ENCODE measurements at regions of chr6 and their contacts with region 1.

Region 1: GRCh38 chr6:40328405-40328987 is 258.7 kb downstream of the LRFN2 start:
- DNase-seq: peak; percentile 84
- ATAC-seq: peak; percentile 80
- H3K4me3 Mint-ChIP-seq: peak overlapping the region; percentile 34
- H3K27ac Mint-ChIP-seq: peak overlapping the region; percentile 42
- H3K4me1 Mint-ChIP-seq: peaks cover 70% of the 10 kb centered on the region
- H3K27me3 Mint-ChIP-seq: peaks cover 20% of the 10 kb centered on the region
- CTCF ChIP-seq: peak; percentile 79

Region 2: DNA sequence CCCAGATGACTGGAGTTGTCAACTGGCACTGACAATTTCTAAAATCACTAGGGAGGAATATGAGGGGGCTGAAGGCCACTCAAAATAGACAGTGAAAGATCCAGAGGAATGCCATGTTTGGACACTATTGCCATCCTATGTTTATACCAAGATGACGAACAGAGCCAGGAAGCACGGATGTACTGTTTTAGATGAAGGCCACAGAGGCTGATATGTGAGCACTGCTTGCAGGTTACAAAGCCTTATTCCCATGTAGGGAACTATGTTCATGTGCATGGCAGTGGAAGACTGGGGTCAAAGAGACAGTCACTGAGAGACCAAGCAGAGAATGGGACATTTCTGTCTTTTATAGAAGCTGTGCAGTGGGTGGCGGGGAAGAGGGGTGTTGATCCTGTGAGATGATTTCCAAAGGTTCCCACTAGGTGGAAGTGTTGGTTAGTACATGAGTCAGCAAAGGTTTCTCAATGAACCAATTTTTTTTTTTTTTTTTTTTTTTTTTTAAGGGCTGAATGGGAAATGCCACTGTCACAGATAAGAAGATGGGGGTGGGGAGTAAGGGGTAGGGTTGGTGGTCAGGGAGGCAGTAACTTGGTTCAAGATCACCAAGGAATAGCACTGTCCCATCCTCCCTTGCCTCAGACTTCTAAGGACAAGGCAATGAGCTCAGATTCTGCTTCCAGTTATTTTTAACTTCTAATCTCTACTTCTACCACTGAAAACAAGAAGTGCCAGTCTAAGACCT is 347.5 kb before region 1 on chr6:
- CTCF ChIA-PET with region 1: interaction called, 17 read pairs
- POLR2A ChIA-PET with region 1: no interaction called
- DNase-seq: peak; percentile 24
- ATAC-seq: peak; percentile 82
- H3K4me3 Mint-ChIP-seq: no peak overlapping the region
- H3K27ac Mint-ChIP-seq: no peak overlapping the region
- H3K4me1 Mint-ChIP-seq: peaks cover 7% of the 10 kb centered on the region
- H3K27me3 Mint-ChIP-seq: no peaks in the 10 kb centered on the region
- CTCF ChIP-seq: peak; percentile 39

Region 3: DNA sequence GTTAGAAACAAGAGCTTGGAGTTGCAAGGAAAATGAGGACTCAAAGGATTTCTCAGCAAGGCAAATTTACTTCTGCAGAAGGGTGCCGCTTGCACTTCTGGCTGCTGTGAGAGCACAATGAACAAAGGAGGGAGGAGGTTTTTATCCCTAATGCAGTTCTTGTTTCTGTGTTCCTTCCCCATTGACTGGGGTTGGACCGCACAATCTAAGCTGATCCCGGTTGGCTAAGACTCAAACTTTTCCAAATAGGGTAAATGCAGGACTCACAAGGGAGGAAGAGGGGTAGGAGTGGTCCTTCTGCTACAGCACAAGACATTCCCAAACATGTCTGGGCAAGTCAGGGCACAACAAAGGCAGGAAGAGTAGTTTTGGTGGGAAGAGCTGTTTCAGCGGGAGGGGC is 144.6 kb before region 1 on chr6:
- CTCF ChIA-PET with region 1: no interaction called
- POLR2A ChIA-PET with region 1: no interaction called
- DNase-seq: no peak
- ATAC-seq: peak; percentile 77
- H3K4me3 Mint-ChIP-seq: no peak overlapping the region
- H3K27ac Mint-ChIP-seq: peak overlapping the region; percentile 50
- H3K4me1 Mint-ChIP-seq: peaks cover 38% of the 10 kb centered on the region
- H3K27me3 Mint-ChIP-seq: no peaks in the 10 kb centered on the region; the same call in 1 of the 2 replicates
- CTCF ChIP-seq: no peak

Region 4: DNA sequence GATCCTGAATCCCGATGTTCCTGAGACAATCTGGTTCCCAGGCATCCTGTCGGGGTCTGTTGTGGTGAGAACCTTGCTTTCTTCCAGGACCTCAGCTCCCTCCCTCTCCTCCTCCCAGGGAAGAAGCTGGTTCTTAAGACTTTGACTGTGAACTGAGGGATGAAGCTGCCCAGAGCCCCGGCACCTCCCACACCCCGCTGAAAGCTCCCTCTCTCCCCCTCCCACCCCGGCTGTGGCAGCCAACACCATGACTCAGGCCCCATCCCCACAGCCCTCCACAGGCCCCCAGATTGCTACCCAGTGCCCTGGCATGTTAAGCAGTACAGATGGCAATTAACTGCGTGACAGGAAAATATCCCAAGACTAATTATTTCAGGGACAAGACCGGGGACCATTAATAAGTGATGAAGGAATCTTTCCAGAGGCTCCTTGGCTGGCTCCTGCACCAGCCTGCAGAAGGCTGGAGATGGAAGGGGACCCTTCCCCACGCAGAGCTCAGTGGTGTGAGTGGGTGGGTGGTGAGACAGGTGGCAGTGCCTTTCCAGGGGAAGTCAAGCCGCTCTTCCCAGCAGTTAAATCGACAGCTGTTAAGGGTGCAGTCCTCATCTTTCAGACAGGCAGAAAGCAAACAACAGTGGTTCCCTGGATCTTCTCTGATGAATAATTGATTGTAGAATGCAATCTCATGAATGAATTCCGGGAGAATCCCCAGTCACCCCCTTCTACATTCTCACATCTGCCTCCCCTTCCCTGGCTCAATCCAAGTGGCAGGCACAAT is 20.8 kb after region 1 on chr6:
- CTCF ChIA-PET with region 1: interaction called, 40 read pairs
- POLR2A ChIA-PET with region 1: interaction called, 5 read pairs
- DNase-seq: no peak
- ATAC-seq: peak; percentile 10; the same call in 1 of the 2 replicates
- H3K4me3 Mint-ChIP-seq: no peak overlapping the region
- H3K27ac Mint-ChIP-seq: no peak overlapping the region
- H3K4me1 Mint-ChIP-seq: peaks cover 18% of the 10 kb centered on the region
- H3K27me3 Mint-ChIP-seq: no peaks in the 10 kb centered on the region
- CTCF ChIP-seq: no peak

Region 5: GRCh38 chr6:40479706-40480105 is 151.2 kb after region 1 on chr6:
- CTCF ChIA-PET with region 1: interaction called, 10 read pairs
- POLR2A ChIA-PET with region 1: no interaction called
- DNase-seq: no peak
- ATAC-seq: no peak
- H3K4me3 Mint-ChIP-seq: no peak overlapping the region
- H3K27ac Mint-ChIP-seq: no peak overlapping the region
- H3K4me1 Mint-ChIP-seq: peaks cover 15% of the 10 kb centered on the region
- H3K27me3 Mint-ChIP-seq: no peaks in the 10 kb centered on the region
- CTCF ChIP-seq: no peak

Region 6: DNA sequence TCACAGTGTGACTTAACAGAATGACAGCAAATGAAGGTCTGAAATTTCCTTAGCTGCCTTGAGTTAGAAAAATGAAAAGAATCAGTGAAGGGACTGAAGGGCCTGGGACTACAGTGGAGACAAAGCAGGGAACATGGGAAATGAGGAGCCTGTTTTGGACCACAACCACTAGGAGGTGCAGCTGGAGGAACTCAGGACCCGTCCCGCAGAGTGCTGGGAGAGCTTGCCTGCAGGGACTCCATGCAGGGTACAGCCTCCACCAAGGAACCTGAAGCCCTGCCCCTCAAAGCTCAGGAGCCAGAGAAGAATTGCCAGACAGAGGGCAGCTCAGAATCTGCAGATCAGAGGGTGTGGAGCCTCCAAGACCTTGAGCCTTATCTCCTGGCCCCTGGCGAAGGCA is 207.9 kb after region 1 on chr6:
- CTCF ChIA-PET with region 1: interaction called, 17 read pairs
- POLR2A ChIA-PET with region 1: no interaction called
- DNase-seq: peak; percentile 54
- ATAC-seq: peak; percentile 93
- H3K4me3 Mint-ChIP-seq: no peak overlapping the region
- H3K27ac Mint-ChIP-seq: no peak overlapping the region
- H3K4me1 Mint-ChIP-seq: peaks cover 22% of the 10 kb centered on the region
- H3K27me3 Mint-ChIP-seq: no peaks in the 10 kb centered on the region; the same call in 1 of the 2 replicates
- CTCF ChIP-seq: no peak

Region 7: DNA sequence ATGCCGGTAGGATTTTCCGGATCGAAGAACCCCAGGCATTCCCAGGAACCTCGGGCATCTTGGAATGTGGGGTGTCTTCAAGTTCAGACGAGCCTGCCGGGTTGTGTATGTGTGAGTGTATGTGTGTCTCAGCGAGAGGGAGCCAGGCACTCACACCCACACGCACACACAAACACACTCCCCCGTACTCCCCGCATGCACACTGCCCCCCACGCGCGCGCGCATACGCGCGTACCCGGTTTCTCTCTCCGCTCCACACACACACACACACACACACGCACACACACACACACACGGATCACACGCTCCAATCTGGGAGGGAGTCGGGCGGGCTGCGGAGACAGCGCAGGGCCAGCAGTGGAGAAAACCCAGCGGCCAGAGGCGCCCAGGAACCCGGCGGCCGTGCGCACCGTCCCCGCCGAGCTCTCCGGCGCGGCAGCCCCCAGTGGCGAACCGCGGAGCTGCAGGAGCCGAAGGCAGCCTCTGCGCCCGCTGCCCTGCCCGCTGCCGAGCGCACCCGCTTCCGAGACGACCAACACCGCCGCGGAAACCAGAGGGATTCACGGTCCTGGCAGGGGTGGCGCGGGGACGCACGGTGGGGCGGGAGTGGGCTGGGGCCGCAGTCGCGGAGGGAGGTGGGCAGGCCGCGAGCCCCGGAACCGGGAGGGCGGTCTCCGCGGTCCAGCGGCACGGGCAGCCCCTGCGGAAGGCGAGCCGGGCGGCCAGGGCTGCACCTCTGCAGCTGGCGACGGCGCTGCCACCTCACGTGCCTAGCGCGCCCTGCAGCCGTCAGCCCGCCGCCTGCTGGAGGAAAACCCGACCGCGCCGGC is 259.0 kb after region 1 on chr6 and contains the start of gene LRFN2:
- CTCF ChIA-PET with region 1: interaction called, 130 read pairs
- POLR2A ChIA-PET with region 1: no interaction called
- DNase-seq: peak; percentile 86
- ATAC-seq: peak; percentile 81
- H3K4me3 Mint-ChIP-seq: peak within 1 kb of the TSS; percentile 80
- H3K27ac Mint-ChIP-seq: no peak within 1 kb of the TSS
- H3K4me1 Mint-ChIP-seq: peaks cover 40% of the 10 kb centered on the region
- H3K27me3 Mint-ChIP-seq: peaks cover 49% of the 10 kb centered on the region
- CTCF ChIP-seq: peak; percentile 59
- total RNA-seq, gene LRFN2: 1.3 to 1.6 TPM (median 1.4 TPM) in 3 replicates

Region 8: DNA sequence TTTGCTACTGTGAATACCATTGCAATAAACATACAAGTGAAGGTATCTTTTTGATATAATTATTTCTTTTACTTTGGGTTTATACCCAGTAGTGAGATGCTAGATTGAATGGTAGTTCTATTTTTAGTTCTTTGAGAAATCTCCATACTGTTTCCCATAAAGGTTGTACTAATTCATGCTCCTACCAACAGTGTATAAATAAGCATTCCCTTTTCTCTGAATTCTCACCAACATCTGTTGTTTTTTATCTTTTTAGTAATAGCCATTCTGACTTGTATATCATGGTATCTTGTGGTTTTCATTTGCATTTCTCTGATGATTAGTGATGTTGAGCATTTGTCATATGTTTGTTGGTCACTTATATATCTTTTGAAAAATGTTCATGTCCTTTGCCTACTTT is 442.3 kb after region 1 on chr6:
- CTCF ChIA-PET with region 1: no interaction called
- POLR2A ChIA-PET with region 1: no interaction called
- DNase-seq: no peak
- ATAC-seq: no peak
- H3K4me3 Mint-ChIP-seq: no peak overlapping the region
- H3K27ac Mint-ChIP-seq: no peak overlapping the region
- H3K4me1 Mint-ChIP-seq: no peaks in the 10 kb centered on the region
- H3K27me3 Mint-ChIP-seq: no peaks in the 10 kb centered on the region
- CTCF ChIP-seq: no peak